IMR-90 (cell line): ENCODE measurements at regions of chr12 and their contacts with region 1.

Region 1: DNA sequence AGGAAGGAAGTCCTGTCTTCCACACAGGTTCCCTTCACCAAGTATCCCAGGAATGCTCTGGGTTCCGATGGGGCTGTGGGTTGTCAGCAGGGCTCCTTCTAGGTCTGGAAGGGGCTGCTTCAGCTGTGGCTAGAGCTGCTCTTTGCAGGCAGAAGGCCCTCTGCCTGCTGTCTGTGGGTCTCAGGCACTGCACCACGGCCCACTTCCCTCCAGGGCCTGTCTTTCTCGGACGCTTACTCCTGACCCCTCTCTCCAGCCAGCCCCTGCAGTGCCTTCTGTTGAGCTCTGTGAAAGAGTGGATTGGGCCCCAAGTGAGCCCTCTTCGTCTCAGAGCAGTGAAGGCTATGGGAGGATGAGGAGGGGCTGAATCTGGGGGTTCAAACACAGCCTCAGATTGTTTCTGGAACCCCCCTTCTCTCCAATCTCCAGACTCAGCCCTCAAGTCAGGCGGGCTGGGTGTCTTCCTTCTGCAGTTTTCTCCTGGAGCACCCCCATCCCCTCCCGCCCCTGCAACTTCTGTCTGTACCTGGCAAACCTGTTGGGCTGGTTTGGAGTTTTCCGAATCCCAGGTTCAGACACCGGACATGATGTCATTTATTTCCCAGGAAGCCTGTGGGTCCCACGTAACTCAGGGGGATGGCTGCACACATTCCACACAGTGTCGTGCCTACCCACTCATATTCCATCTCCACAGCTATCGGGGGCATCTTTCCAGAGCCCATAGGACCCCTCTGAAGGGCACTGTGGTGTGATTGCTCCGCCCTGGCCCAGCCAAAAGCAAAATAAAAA is 24.9 kb upstream of the SPPL3 start:
- DNase-seq: no peak
- ATAC-seq: no peak
- H3K4me3 ChIP-seq: no peak overlapping the region
- H3K27ac ChIP-seq: no peak overlapping the region
- H3K4me1 ChIP-seq: no peaks in the 10 kb centered on the region
- H3K27me3 ChIP-seq: no peaks in the 10 kb centered on the region; the same call in 1 of the 2 replicates
- CTCF ChIP-seq: no peak
- POLR2A ChIP-seq: no peak
- RAD21 ChIP-seq: no peak

Region 2: DNA sequence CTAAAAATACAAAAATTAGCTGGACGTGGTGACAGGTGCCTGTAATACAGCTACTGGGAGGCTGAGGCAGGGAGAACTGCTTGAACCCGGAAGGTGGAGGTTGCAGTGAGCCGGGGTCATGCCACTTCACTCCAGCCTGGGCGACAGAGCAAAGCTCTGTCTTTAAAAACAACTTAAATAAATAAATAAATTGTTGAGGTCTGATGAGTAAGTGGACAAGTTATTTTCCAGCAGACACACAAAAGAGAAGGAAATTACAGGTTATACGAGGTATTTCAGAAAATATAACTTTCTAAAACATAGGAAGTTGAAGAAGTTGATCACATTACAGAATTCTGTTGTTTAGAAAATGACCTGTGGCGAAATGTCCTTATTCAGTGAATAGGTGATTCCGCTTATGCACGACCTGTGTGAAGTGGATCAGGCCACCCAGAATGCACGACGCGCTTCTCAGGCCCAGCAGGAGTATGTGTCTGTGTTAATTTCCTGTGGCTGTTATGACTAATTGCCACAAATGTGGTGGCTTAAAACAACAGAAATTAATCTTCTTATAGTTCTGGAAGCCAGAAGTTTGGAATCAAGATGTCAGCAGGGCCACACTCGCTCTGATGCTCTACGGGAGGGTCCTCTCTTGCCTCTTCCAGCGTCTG is 241.7 kb after region 1 on chr12:
- CTCF ChIA-PET with region 1: interaction called, 10 read pairs
- POLR2A ChIA-PET with region 1: no interaction called
- dilution Hi-C with region 1: no loop called
- in situ Hi-C with region 1: no loop called
- intact Hi-C with region 1: no loop called
- DNase-seq: no peak
- ATAC-seq: no peak
- H3K4me3 ChIP-seq: no peak overlapping the region
- H3K27ac ChIP-seq: no peak overlapping the region
- H3K4me1 ChIP-seq: peaks cover 2% of the 10 kb centered on the region; the same call in 1 of the 2 replicates
- H3K27me3 ChIP-seq: peaks cover 3% of the 10 kb centered on the region; the same call in 1 of the 2 replicates
- CTCF ChIP-seq: no peak
- POLR2A ChIP-seq: no peak
- RAD21 ChIP-seq: no peak